IMR-90 (cell line): ENCODE measurements at regions of chr6 and their contacts with region 1.

Region 1: GRCh38 chr6:146700078-146700686 is 101.4 kb downstream of the ADGB start:
- DNase-seq: peak; percentile 83
- ATAC-seq: peak; percentile 72
- H3K4me3 ChIP-seq: no peak overlapping the region
- H3K27ac ChIP-seq: no peak overlapping the region
- H3K4me1 ChIP-seq: no peaks in the 10 kb centered on the region
- H3K27me3 ChIP-seq: no peaks in the 10 kb centered on the region
- CTCF ChIP-seq: peak; percentile 84
- POLR2A ChIP-seq: no peak
- RAD21 ChIP-seq: peak; percentile 85

Region 2: GRCh38 chr6:145929037-145929633 is 771.0 kb before region 1 on chr6:
- CTCF ChIA-PET with region 1: interaction called, 8 read pairs
- POLR2A ChIA-PET with region 1: no interaction called
- dilution Hi-C with region 1: no loop called
- in situ Hi-C with region 1: loop called (anchors 10 kb)
- intact Hi-C with region 1: loop called (anchors 1 kb)
- DNase-seq: peak; percentile 60
- ATAC-seq: peak; percentile 21; the same call in 1 of the 2 replicates
- H3K4me3 ChIP-seq: no peak overlapping the region
- H3K27ac ChIP-seq: no peak overlapping the region
- H3K4me1 ChIP-seq: no peaks in the 10 kb centered on the region
- H3K27me3 ChIP-seq: no peaks in the 10 kb centered on the region
- CTCF ChIP-seq: peak; percentile 64
- POLR2A ChIP-seq: no peak
- RAD21 ChIP-seq: peak; percentile 54

Region 3: GRCh38 chr6:146532702-146533101 is 167.5 kb before region 1 on chr6:
- CTCF ChIA-PET with region 1: no interaction called
- POLR2A ChIA-PET with region 1: no interaction called
- dilution Hi-C with region 1: no loop called
- in situ Hi-C with region 1: loop called (anchors 10 kb)
- intact Hi-C with region 1: no loop called
- DNase-seq: no peak
- ATAC-seq: no peak
- H3K4me3 ChIP-seq: no peak overlapping the region
- H3K27ac ChIP-seq: no peak overlapping the region
- H3K4me1 ChIP-seq: no peaks in the 10 kb centered on the region
- H3K27me3 ChIP-seq: no peaks in the 10 kb centered on the region
- CTCF ChIP-seq: no peak
- POLR2A ChIP-seq: no peak
- RAD21 ChIP-seq: no peak

Region 4: DNA sequence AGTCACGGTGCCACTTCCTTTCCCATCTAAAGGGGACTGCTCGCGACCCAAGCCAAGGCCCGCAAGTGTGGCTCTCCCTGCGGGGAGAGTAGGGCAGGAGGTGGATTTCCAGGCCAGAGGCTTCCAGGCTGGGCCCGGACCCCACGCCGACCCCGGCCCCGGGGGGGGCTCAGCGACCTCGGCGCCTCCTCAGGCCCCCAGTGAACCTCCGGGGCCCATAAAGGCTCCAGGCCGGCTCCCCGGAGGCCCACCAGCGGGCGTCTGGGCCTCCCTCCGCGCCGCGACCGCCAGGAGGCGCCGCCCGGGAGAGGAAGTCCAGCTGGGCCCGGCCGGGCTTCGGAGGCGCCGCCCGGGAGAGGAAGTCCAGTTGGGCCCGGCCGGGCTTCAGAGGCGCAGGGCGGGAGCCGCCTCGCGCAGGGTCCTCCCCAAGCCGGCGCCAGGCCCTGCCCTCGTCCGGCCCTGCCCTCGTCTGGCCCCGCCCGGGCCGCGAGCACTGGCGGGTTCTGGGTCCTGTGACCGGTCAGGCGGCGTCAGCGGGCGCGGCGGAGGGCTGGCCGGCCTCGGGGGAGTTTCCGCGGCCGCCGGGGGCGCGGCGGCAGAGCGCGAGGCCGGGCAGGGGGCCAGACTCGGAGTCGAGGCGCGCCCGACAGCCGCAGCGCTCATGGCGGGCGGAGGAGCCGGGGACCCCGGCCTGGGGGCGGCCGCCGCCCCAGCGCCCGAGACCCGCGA is 156.8 kb before region 1 on chr6 and contains the start of gene RAB32:
- CTCF ChIA-PET with region 1: interaction called, 3 read pairs
- POLR2A ChIA-PET with region 1: no interaction called
- dilution Hi-C with region 1: no loop called
- in situ Hi-C with region 1: loop called (anchors 10 kb)
- intact Hi-C with region 1: loop called (anchors 1 kb)
- DNase-seq: peak; percentile 95
- ATAC-seq: peak; percentile 96
- H3K4me3 ChIP-seq: peak within 1 kb of the TSS; percentile 76
- H3K27ac ChIP-seq: peak within 1 kb of the TSS; percentile 89
- H3K4me1 ChIP-seq: peaks cover 4% of the 10 kb centered on the region; the same call in 1 of the 2 replicates
- H3K27me3 ChIP-seq: no peaks in the 10 kb centered on the region
- CTCF ChIP-seq: peak; percentile 69
- POLR2A ChIP-seq: peak; percentile 70
- RAD21 ChIP-seq: peak; percentile 53
- total RNA-seq, gene RAB32: 104 and 108 TPM in 2 replicates

Region 5: DNA sequence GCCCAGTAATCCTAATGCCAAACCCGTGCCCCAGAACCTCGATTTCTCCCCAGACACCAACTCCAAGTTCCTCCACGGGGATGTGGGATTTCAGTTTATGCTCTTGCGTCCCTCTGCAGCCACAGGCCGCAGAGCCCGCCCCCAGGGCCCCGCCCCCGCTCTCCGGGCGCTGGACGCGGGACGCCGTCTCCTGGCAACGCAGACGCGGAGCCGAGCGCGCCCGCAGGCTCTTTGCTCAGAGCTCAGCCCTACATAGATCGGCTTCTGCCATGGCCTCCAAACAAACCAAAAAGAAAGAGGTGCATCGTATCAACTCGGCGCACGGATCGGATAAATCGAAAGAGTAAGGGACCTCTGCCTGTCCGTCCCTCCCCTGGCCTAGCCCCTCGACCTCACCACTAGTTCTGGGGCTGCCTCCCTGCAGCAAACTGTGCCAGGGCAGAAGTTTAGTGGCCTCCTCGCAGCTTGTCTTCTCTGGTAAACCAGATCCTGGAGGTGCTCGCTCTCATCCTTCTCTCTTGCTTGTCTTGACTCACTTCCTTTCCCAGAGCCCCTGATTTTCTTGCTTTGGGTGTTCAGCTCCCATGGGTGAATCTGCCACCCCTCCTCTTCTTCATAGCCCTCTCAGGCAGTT is 101.3 kb before region 1 on chr6 and contains the start of gene ADGB:
- CTCF ChIA-PET with region 1: no interaction called
- POLR2A ChIA-PET with region 1: no interaction called
- dilution Hi-C with region 1: no loop called
- in situ Hi-C with region 1: no loop called
- intact Hi-C with region 1: loop called (anchors 2 kb)
- DNase-seq: peak; percentile 35
- ATAC-seq: peak; percentile 100
- H3K4me3 ChIP-seq: peak within 1 kb of the TSS; percentile 45
- H3K27ac ChIP-seq: no peak within 1 kb of the TSS
- H3K4me1 ChIP-seq: no peaks in the 10 kb centered on the region
- H3K27me3 ChIP-seq: 0 out of 2 replicates have a peak, but pooled peaks cover 1% of the 10 kb centered on the region
- CTCF ChIP-seq: no peak
- POLR2A ChIP-seq: no peak
- RAD21 ChIP-seq: no peak
- total RNA-seq, gene ADGB: not detected in 2 replicates